ENCODE measurements at regions of chr10 and their contacts with region 1.

Region 1: GRCh38 chr10:96513698-96514561 is at the start of gene TLL2:
- DNase-seq: peak; percentile 94
- total RNA-seq, gene TLL2: 0.10 TPM in 1 of 2 donors, not detected in the other

Region 2: GRCh38 chr10:96380817-96381216 is 133.1 kb before region 1 on chr10:
- intact Hi-C with region 1: loop called in 1 of 2 experiments (anchors 10 kb)
- DNase-seq: peak; percentile 53

Region 3: DNA sequence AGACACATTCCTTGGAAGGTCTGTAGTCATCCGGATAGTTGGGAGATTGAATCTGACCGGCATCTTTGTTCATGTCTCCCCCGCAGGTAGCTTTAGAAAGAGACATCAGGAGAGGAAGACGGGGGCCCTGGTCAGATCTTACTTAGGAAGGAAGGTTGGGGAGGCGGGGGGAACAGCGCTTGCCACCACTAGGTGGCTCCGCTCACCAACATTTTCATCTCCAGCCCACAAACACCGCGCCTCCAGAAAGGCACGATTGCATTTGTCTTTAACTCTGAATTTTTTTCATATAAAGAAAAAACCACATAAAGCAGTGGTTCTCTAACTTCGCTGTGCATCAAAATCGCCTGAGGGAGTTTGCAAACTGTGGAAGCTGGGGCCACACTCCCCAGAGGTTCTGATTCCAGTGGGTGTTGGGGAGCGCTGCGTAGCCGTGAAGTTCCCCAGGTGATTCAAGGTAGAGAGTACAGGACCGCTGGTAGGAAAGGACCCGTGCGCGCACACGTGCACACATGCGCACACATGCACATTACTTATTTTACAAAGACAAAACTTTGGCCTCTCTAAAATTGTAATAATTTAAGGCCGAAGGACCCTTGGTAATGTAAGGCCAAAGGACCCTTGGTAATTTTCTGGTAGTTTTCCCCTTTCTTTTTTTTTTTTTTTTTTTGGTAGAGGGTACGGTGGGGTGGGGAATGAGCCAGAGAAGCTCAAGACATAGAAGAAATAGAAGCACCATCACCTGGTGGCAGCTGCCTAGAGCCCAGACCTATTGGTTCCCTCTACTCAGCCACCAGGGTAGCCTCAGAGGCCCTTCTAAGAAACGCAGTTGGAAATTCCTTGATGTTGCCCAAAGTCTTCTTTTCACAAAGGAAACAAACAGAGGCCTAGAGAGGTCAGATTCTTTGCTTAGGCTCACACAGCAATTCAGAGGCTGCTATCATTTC is 117.7 kb before region 1 on chr10:
- intact Hi-C with region 1: loop called in 1 of 2 experiments (anchors 10 kb)
- DNase-seq: peak; percentile 88

Measured in posterior vena cava (tissue), 2 donors.